GM10248 (cell line): ENCODE measurements at regions of chr16 and their contacts with region 1.

Region 1: GRCh38 chr16:23504451-23505179 is 5.7 kb downstream of the GGA2 start:
- DNase-seq: peak; percentile 67
- CTCF ChIP-seq: no peak

Region 2: GRCh38 chr16:23518435-23518891 is 13.8 kb after region 1 on chr16:
- CTCF ChIA-PET with region 1: interaction called, 31 read pairs
- POLR2A ChIA-PET with region 1: interaction called, 3 read pairs
- DNase-seq: no peak
- CTCF ChIP-seq: no peak